Aorta (tissue), 5 donors: ENCODE measurements at regions of chr18 and their contacts with region 1.

Region 1: DNA sequence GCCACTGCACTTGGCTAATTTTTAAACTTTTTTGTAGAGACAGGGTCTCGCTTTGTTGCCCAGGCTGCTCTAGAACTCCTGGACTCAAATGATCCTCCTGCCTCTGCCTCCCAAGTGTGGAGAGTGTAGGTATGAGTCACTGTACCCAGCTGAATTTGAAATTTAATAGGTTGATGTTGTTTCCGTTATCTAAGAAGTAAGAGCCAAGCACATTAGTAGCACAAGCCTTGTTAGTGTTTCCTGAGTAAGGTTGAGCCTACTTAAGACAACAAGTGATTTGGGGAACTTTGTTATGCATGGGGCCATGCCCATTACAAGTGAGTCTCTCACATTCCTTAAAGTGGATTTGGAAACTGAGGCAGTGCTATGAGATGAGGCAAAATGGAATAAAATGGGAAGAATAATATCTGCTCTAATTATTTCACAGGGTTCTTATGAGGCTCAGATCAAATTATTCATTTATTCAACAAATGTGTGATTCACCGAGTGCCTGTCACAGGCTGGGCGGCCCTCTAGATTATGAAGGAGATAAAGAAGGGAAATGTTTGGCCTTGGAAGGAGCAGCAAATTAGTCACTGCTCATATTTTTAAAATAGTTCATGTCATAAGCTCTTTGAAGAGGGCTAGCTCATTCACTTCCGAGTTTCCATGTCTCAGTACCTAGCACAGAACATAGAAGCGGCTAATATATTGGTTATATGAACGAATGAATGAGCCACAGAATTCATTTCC is 217.2 kb downstream of the LDLRAD4 start:
- DNase-seq: peak; percentile 75 to 87
- ATAC-seq: peak; percentile 82
- H3K4me3 ChIP-seq: no peak overlapping the region
- H3K27ac ChIP-seq: peak overlapping the region; percentile 8 to 97
- H3K4me1 ChIP-seq: peaks cover 3 to 8% of the 10 kb centered on the region in 2 donors
- H3K27me3 ChIP-seq: no peaks in the 10 kb centered on the region

Region 2: DNA sequence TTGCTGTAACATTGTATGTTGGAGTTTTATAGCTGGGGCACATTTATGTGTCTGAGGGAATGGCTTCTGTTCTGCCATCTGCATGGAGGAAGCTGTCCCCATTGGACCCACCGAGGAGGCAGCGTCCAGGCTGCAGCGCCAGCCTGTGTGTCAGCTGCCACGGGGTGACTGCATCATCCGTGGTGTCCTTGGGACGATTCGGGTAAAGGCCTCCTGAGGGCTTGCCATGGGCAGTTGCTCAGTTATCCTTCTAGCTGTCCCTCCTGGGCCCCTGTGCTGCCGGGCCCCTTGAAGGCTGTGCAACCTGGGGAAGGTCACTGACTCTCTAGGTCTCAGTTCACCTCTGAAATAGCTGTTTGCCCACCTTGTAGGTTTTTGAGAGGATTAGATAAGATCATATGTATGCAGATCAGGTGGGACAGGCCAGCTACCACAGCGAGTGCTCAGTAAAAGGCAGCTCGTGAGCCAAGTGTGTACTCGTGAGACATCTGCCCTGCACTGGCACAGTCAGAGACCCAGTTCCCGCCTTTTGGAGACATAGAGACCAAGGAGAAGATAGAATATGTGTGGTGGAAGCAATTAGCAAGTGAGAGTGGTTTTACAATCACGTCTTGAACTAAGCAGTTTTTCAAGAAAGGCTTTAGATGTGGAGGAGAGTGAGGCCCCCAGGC is 206.6 kb before region 1 on chr18:
- intact Hi-C with region 1: loop called in 1 of 2 experiments (anchors 5 kb)
- DNase-seq: no peak
- ATAC-seq: no peak
- H3K4me3 ChIP-seq: no peak overlapping the region
- H3K27ac ChIP-seq: no peak overlapping the region
- H3K4me1 ChIP-seq: no peaks in the 10 kb centered on the region
- H3K27me3 ChIP-seq: no peaks in the 10 kb centered on the region

Region 3: DNA sequence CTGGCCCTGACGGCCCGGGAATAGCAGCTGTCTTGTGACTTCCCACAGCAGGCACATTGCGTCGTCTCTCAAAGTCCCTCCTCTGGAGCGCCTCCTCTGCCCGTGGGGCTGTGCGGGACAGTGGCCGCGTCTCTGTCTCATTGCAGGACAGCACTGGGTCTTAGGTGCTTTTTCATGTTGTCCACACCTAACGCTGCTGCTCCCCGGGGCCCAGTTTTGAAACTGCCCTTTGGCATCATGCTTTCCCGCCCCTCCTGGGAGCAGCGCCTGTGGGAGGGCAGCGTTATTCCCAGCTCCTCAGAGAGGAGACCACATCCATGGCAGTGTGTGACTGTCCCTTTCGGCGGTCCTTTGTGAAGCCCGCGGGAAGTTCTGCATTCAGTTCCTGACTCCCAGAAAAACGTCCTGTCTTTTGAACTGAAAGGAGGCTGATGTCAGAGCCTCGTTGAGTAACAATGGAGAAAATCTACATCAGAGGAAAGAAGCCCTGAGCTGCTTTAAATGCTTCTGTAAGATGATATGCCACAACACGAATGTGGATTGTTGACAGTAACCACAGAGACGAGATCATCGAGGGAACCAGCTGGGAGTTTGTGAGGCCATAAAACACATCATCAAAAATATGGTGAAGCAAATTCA is 64.6 kb after region 1 on chr18:
- intact Hi-C with region 1: loop called (anchors 5 kb)
- DNase-seq: no peak
- ATAC-seq: peak; percentile 68
- H3K4me3 ChIP-seq: no peak overlapping the region
- H3K27ac ChIP-seq: peak overlapping the region; percentile 53 to 96
- H3K4me1 ChIP-seq: peaks cover 3 to 5% of the 10 kb centered on the region in 2 donors
- H3K27me3 ChIP-seq: no peaks in the 10 kb centered on the region

Region 4: DNA sequence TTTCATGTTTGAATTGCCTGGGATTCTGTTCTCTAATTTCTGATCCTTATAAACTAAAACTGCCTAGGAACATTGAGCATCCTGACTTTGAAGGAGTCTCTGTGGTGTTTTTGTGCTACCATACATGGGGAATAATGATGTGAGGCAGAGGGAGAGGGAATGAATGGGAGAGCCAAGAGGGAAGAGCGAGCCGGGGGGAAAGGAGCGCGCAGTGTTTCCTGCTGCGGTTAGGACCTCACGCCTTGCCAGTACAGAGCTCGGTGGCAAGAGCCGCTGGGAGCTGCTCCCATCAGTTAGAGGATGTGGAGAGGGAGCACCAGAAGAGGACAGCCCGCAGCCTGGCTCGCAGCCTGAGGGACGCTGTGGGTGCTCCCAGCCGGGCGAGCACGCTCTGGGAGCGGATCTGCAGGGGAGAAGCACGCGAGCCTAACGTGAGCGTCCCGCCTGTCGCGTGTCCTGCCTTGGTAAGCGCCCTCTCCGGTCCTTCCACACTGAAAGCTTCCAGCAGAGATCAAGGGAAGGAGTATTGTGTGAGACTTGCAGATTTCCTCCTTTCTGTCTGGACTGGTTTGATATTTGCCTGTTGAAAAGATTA is 175.9 kb after region 1 on chr18:
- intact Hi-C with region 1: loop called in 1 of 2 experiments (anchors 10 kb)
- DNase-seq: peak; percentile 73 to 85
- ATAC-seq: peak; percentile 63
- H3K4me3 ChIP-seq: peak overlapping the region; percentile 17 to 44
- H3K27ac ChIP-seq: no peak overlapping the region
- H3K4me1 ChIP-seq: no peaks in the 10 kb centered on the region
- H3K27me3 ChIP-seq: no peaks in the 10 kb centered on the region